ENCODE measurements at regions of chr18 and their contacts with region 1.

Region 1: GRCh38 chr18:33231474-33232317 is 208.8 kb downstream of the CCDC178 start:
- DNase-seq: peak; percentile 75 to 80 (median 79)
- ATAC-seq: peak; percentile 90
- H3K4me3 ChIP-seq: no peak overlapping the region
- H3K27ac ChIP-seq: no peak overlapping the region
- H3K4me1 ChIP-seq: no peaks in the 10 kb centered on the region
- H3K27me3 ChIP-seq: no peaks in the 10 kb centered on the region
- CTCF ChIP-seq: peak; percentile 60 to 87 (median 86)
- POLR2A ChIP-seq: no peak

Region 2: GRCh38 chr18:33483908-33484307 is 252.2 kb after region 1 on chr18:
- intact Hi-C with region 1: loop called (anchors 10 kb)
- DNase-seq: no peak
- ATAC-seq: no peak
- H3K4me3 ChIP-seq: no peak overlapping the region
- H3K27ac ChIP-seq: no peak overlapping the region
- H3K4me1 ChIP-seq: no peaks in the 10 kb centered on the region
- H3K27me3 ChIP-seq: no peaks in the 10 kb centered on the region
- CTCF ChIP-seq: no peak
- POLR2A ChIP-seq: no peak

Measured in body of pancreas (tissue), 4 donors.